Aorta (tissue), 5 donors: ENCODE measurements at regions of chr1 and their contacts with region 1.

Region 1: DNA sequence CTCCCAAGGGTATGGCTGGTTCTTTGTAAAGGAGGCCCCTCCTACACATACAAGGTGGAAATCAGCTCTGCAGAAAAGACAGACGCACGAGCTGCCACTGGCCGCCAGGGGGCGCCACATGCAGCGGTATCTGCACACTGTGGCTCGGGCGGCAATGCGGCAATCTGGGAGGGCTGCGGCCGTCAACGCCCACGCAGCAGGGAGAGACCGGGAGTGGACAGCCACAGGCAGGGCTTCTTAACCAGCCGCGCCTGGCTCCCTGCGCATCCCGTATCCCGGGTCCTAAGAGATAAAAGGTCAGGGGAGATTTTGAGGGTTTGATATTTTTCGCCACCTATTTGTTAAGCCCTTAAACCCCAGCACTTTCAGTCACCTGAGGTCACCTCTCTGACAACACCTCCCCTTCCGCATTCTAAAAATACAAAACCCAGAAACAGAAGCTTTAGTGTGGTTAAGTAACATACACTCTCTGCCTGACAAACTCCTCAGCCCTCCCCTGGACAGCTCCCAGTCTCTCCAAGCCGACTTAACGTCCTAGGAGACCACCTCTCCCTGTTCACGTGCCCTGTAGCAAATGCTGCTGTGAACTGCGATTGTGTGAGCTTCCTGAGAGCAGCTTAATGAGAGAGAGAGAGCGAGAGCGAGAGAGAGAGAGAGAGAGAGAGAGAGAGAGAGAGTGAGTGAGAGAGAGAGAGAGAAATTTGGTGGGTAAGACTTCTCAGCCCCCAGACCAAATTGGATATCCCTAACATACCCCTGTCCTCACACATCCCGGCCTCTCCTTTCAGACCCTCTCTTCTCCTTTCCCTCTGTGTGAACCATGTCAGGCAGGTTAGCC is 13.5 kb upstream of the KCNA2 start:
- DNase-seq: peak; percentile 90 to 95
- ATAC-seq: peak; percentile 86
- H3K4me3 ChIP-seq: no peak overlapping the region
- H3K27ac ChIP-seq: no peak overlapping the region
- H3K4me1 ChIP-seq: no peaks in the 10 kb centered on the region
- H3K27me3 ChIP-seq: peaks cover 0 to 1% of the 10 kb centered on the region in 2 donors

Region 2: DNA sequence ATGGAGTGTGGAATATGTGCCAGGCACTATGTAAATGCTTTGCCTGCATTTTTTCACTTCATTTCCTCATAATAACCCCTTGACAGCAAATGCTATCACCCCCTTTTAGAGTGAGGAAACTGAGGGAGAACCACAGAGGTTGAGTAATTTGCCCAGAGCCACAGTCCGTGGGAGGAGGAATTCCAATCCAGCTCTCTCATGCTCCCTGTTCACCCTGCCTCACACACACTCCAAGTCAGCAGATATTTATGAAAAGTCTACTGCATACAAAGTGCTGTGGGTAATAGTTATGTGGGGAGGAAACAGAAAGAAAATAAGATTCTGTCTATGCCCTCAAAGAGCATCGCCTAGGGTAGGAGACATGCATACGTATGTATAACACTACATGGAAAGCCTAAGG is 311.4 kb before region 1 on chr1:
- intact Hi-C with region 1: no loop called
- DNase-seq: no peak
- ATAC-seq: no peak
- H3K4me3 ChIP-seq: no peak overlapping the region
- H3K27ac ChIP-seq: no peak overlapping the region
- H3K4me1 ChIP-seq: no peaks in the 10 kb centered on the region
- H3K27me3 ChIP-seq: no peaks in the 10 kb centered on the region

Region 3: DNA sequence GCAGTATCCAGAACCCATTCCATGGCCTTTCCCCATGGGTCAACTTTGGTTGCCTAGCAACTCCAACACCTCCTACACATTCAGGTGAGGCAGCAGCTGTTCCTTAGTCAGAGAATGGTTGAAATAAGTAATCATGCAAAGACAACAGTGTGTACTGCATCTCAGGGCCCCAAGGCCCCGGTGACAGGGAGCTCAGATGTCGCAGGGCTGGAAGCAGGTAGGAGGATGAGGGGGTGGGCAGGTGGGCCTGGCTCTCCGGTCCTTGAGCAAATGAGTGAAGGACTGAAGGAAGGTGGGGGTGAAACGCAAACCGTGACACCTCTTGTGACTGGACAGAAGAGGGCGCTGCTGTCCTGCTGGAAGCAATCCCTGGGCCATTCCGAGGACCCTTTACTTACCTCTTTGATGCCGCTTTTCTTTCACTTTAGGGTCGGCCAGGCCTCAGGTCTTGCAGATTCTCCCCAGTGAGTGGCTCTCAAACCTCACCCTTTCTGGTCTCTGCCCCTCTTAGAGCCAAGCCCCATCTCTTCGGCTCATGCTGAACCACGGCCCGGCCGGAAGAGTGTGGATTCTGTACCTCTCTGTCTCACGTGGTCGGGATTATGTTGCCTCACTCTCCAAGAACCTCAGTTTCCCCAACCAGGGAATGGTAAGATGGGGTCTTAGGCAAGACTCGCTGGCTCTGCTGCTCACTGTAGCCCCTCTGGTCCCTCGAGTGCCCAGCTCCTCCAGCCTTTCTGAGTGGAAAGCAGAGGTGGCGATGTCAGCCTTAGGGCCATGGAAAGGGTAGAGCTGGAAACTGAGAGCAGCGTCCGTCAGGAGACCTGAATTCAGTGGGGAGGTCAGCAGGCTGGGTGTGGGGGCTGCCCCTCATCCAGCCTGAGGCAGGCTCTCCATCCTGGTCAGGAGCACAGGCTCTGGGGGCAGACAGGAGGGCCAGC is 95.0 kb before region 1 on chr1:
- intact Hi-C with region 1: loop called (anchors 1 to 5 kb)
- DNase-seq: no peak
- ATAC-seq: no peak
- H3K4me3 ChIP-seq: no peak overlapping the region
- H3K27ac ChIP-seq: no peak overlapping the region
- H3K4me1 ChIP-seq: no peaks in the 10 kb centered on the region
- H3K27me3 ChIP-seq: no peaks in the 10 kb centered on the region

Region 4: DNA sequence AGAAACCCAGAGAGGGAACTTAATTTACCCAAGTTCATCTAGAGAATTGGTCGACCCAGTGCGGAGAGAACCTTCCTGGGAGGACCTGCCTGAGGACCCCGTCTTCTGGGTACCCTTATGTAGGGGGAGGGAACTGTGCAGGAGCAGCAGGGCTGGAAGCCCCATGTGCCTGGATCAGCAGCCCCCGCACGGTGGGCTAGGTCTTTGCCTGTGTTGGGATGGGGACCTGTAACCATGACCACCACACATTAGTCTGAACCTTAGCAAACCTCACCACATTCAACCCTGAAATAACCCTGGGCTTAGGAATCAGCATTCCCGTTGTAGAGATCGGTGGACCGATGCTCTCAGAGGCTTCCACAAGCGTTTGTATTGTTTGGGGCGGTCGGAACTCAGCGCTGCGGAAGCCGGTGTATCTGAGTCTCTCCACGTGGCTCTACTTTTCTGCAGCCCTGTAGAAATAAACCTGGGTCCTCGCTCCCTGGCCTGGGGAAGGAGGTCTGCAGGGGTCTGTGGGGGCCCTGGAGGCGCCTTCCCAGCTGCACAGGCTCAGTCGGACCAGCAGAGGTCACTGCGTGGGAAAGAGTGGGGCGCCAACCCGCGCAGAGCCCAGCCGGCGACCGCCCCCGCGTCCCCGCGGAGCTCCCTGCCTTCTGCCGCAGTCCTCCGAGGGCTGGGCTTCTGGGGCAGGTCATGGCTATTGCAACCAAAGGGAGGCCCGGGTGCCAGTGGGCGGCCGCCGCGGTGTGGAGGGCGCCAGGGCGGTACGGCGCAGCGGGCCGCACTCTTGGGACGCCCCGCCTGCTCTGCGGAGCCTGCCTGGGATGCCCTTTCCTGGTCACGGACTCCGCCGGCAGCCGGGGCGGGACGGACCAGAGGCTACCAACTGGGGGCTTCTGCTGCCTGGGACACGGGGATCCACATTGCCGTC is 64.5 kb before region 1 on chr1:
- intact Hi-C with region 1: loop called (anchors 2 to 5 kb)
- DNase-seq: peak; percentile 68 to 89
- ATAC-seq: peak; percentile 89
- H3K4me3 ChIP-seq: no peak overlapping the region
- H3K27ac ChIP-seq: no peak overlapping the region
- H3K4me1 ChIP-seq: no peaks in the 10 kb centered on the region
- H3K27me3 ChIP-seq: no peaks in the 10 kb centered on the region

Region 5: GRCh38 chr1:110565565-110565964 is 54.1 kb before region 1 on chr1:
- intact Hi-C with region 1: no loop called
- DNase-seq: no peak
- ATAC-seq: no peak
- H3K4me3 ChIP-seq: no peak overlapping the region
- H3K27ac ChIP-seq: no peak overlapping the region
- H3K4me1 ChIP-seq: no peaks in the 10 kb centered on the region
- H3K27me3 ChIP-seq: no peaks in the 10 kb centered on the region

Region 6: GRCh38 chr1:110766025-110766647 is 146.5 kb after region 1 on chr1:
- intact Hi-C with region 1: loop called in 1 of 2 experiments (anchors 5 kb)
- DNase-seq: no peak
- ATAC-seq: no peak
- H3K4me3 ChIP-seq: no peak overlapping the region
- H3K27ac ChIP-seq: no peak overlapping the region
- H3K4me1 ChIP-seq: no peaks in the 10 kb centered on the region
- H3K27me3 ChIP-seq: peaks cover 0 to 1% of the 10 kb centered on the region in 2 donors

Region 7: DNA sequence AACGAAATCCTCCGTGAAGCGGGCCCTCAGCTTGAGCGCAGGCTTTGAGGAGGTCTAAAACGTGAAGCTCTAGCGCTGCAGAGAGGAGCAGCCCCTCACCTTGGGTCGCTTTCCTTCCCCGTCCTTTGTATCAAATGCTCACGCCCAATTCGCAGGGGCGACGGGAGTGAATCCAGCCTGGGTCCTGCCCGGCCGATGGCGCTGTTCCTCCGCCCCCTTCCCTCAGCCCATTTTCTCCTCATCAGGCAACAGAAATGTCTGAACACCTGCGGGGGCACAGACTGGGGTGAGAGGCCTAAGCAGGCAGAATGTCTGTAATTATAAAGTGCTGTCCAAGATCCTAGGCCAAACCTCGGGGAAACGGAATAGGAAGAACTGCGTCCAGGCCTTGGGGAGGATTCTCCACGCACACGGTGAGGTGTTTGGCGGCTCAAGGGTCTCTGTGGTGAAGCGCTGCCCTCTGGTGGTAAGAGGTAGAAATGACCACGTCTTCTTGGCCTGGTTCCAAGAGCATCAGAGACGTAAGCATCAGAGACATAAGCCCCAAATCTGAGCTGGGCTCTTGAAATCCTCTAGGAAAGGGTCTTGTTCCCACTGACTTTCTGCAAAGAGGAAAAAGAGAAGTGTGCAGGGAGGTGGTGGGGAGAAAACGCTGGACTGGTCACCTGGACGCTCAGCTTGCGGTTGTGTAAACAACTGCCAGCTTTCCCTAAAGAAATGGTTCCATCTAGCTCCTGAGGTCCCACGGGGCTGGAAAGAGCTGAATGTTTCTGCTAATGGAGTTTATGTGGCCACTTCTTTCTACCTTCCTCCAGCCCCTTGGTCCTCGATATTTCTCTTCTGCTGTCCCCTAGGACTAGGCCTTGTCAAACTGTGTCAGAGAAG is 161.2 kb after region 1 on chr1:
- intact Hi-C with region 1: loop called (anchors 5 kb)
- DNase-seq: peak in 1 of 2 donors; percentile 76
- ATAC-seq: peak; percentile 68
- H3K4me3 ChIP-seq: no peak overlapping the region
- H3K27ac ChIP-seq: no peak overlapping the region
- H3K4me1 ChIP-seq: no peaks in the 10 kb centered on the region
- H3K27me3 ChIP-seq: no peaks in the 10 kb centered on the region